ENCODE measurements at regions of chr5 and their contacts with region 1.

Region 1: GRCh38 chr5:88729084-88729828 is 153.7 kb downstream of the MEF2C start:
- ATAC-seq: peak; percentile 66 to 95 (median 92)
- H3K4me3 ChIP-seq: no peak overlapping the region
- H3K27ac ChIP-seq: no peak overlapping the region
- H3K4me1 ChIP-seq: peaks cover 11 to 25% of the 10 kb centered on the region in 2 donors

Region 2: GRCh38 chr5:89156226-89156625 is 427.0 kb after region 1 on chr5:
- in situ Hi-C with region 1: no loop called
- ATAC-seq: no peak
- H3K4me3 ChIP-seq: no peak overlapping the region
- H3K27ac ChIP-seq: no peak overlapping the region
- H3K4me1 ChIP-seq: no peaks in the 10 kb centered on the region

Region 3: DNA sequence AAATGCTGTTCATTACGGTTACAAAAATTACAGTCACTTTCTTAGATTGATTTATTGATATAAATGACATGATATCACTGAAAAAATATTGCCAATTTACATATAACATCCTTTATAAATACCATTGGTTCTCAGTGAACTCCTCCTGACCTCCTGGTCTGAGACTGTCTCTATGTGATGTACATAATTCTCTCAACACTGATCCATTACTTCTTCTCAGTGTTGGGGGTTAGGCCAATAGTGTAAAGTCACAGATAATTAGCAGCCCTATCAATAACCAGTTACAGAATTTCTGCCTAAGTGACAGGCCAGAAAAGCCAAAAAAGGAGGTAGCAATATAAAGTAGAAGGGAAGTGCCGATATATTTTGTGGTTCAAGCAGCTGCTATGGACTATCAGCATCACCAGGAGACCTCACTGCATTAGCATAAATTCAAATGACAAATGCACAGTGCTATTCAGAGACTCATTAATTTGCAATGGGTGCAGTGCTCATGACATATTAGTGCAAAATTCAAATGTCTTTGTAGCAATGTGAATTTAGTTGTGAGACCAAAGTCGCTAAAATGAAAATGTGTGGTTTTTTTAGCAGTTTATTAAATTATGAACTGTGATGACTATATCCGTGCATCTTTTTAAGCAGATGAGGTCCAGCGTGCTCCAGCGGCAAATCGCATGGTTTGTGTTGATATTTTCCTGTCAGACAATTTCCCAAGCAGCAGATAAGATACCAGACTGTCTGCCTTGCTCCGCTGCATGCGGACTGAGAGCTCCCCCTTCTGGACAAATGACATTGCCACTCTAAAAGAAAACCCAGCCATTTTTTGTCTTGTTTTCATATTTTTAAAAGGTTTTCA is 1535.7 kb after region 1 on chr5:
- in situ Hi-C with region 1: loop called in 4 of 9 experiments (anchors 10 to 25 kb)
- ATAC-seq: peak; percentile 94 to 97 (median 96)
- H3K4me3 ChIP-seq: peak overlapping the region in 1 of 5 donors; percentile 9
- H3K27ac ChIP-seq: no peak overlapping the region
- H3K4me1 ChIP-seq: peaks cover 15 to 19% of the 10 kb centered on the region in 2 donors

Region 4: DNA sequence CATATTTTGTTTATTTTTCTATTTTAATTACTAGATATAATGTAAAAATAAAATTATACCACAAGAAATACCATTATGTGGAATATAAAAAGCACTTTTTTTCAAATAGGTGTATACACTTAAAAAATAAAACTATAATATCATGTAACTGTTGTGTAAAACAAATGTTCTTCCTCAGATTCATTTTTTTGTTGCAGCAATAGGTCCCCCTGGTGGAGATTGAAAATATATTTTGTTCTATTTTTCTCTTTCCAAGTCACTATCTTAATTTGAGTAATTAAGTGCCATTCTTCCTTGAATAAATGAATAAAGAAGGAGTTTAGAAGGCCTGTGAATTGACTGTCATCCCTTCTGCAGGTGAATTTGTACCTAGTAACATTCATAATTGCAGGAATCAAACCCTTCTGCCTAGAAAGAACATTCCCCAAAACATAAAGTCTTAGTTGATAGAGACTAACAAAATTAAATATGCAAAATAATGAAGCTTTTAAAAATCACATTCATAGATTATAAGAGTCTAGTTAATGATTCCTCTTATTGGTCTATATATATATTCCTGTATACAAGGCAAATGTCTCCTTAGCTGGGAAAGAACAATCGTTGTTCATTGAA is 1656.9 kb after region 1 on chr5:
- in situ Hi-C with region 1: loop called in 2 of 9 experiments (anchors 10 to 25 kb)
- ATAC-seq: no peak
- H3K4me3 ChIP-seq: no peak overlapping the region
- H3K27ac ChIP-seq: no peak overlapping the region
- H3K4me1 ChIP-seq: no peaks in the 10 kb centered on the region

Measured in motor neuron (in vitro differentiated cells).